ENCODE measurements at regions of chr2 and their contacts with region 1.

Region 1: GRCh38 chr2:1550658-1551316 is 137.5 kb downstream of the TPO start:
- DNase-seq: peak; percentile 42 to 80 (median 56)
- ATAC-seq: peak; percentile 49 to 86 (median 78)
- H3K4me3 ChIP-seq: no peak overlapping the region
- H3K27ac ChIP-seq: no peak overlapping the region
- H3K4me1 ChIP-seq: peaks cover 0 to 17% (median 6%) of the 10 kb centered on the region in 12 donors
- H3K27me3 ChIP-seq: peaks cover 0 to 7% (median 0%) of the 10 kb centered on the region in 9 donors
- CTCF ChIP-seq: peak; percentile 85 to 100 (median 98)
- POLR2A ChIP-seq: no peak

Region 2: DNA sequence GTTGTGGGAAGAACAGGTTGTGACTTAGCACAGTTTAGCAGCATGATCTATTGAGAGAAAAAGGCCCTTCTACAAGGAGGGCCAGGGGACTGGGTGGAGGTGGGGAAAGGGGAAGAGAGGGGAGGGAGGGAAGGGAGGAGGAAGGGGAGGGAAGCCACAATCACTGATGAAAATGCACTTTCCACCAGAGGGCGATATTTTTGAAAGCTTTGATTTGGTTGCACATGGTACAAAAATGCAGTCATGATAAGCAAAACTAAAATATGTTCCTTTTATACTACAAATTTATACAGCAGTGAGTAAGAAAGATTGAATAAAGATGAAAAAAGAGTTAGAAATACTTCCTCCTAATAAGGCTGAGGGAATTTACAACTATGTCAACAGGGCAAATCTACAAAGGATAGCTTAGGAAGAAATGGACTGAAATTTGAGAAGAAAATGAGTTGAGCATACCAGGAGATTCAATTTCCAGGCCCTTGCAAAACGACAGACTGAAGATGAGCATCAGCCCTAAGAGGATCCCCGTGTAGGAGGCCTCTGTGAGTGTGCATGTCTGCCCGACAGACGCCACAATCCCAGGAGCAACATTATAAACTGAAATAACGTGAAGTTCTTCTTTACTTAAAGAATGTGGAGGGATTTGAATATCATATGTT is 1304.2 kb before region 1 on chr2:
- intact Hi-C with region 1: loop called in 1 of 10 experiments (anchors 5 kb)
- DNase-seq: no peak
- ATAC-seq: no peak
- H3K4me3 ChIP-seq: no peak overlapping the region
- H3K27ac ChIP-seq: no peak overlapping the region
- H3K4me1 ChIP-seq: no peaks in the 10 kb centered on the region
- H3K27me3 ChIP-seq: no peaks in the 10 kb centered on the region
- CTCF ChIP-seq: peak; percentile 25 to 61 (median 46)
- POLR2A ChIP-seq: no peak

Region 3: DNA sequence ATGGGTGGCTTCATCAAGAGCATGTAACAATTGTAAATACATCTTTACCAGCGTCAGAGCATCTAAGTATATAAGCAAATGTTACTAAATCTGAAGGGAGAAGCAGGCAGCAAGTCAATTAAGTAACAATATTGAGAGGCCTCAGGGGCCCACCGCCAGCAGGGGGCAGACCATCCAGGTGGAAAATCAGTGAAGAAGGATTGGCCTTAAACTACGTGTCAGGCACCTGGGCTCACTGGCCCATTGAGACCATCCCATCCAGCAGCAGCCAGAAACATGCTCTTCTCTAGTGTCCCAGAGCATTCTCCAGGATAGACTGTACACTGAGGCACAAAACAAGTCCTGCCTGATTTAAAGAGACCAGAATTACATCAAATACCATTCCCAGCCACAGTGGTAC is 696.3 kb before region 1 on chr2:
- intact Hi-C with region 1: loop called in 9 of 10 experiments (anchors 5 to 10 kb)
- DNase-seq: no peak
- ATAC-seq: no peak
- H3K4me3 ChIP-seq: no peak overlapping the region
- H3K27ac ChIP-seq: no peak overlapping the region
- H3K4me1 ChIP-seq: no peaks in the 10 kb centered on the region
- H3K27me3 ChIP-seq: no peaks in the 10 kb centered on the region
- CTCF ChIP-seq: peak; percentile 19 to 65 (median 50)
- POLR2A ChIP-seq: no peak

Region 4: GRCh38 chr2:955829-956731 is 594.7 kb before region 1 on chr2:
- intact Hi-C with region 1: loop called in 9 of 10 experiments (anchors 2 to 5 kb)
- DNase-seq: no peak
- ATAC-seq: peak in 1 of 4 donors; percentile 48
- H3K4me3 ChIP-seq: no peak overlapping the region
- H3K27ac ChIP-seq: no peak overlapping the region
- H3K4me1 ChIP-seq: peaks cover 0 to 4% (median 0%) of the 10 kb centered on the region in 12 donors
- H3K27me3 ChIP-seq: peaks cover 2 to 47% (median 19%) of the 10 kb centered on the region in 9 donors
- CTCF ChIP-seq: no peak
- POLR2A ChIP-seq: no peak

Region 5: GRCh38 chr2:1742681-1743395 is 192.1 kb after region 1 on chr2:
- intact Hi-C with region 1: loop called in 2 of 10 experiments (anchors 5 to 10 kb)
- DNase-seq: peak; percentile 79 to 84 (median 81)
- ATAC-seq: peak; percentile 34 to 70 (median 46)
- H3K4me3 ChIP-seq: peak overlapping the region; percentile 61 to 96 (median 78)
- H3K27ac ChIP-seq: peak overlapping the region; percentile 60 to 98 (median 92)
- H3K4me1 ChIP-seq: peaks cover 0 to 69% (median 36%) of the 10 kb centered on the region in 12 donors
- H3K27me3 ChIP-seq: peaks cover 0 to 19% (median 0%) of the 10 kb centered on the region in 9 donors
- CTCF ChIP-seq: peak; percentile 16 to 71 (median 54)
- POLR2A ChIP-seq: peak in 1 of 2 donors; percentile 16

Measured in heart left ventricle (tissue), 16 donors.